ENCODE measurements at regions of chr2 and their contacts with region 1.

Region 1: DNA sequence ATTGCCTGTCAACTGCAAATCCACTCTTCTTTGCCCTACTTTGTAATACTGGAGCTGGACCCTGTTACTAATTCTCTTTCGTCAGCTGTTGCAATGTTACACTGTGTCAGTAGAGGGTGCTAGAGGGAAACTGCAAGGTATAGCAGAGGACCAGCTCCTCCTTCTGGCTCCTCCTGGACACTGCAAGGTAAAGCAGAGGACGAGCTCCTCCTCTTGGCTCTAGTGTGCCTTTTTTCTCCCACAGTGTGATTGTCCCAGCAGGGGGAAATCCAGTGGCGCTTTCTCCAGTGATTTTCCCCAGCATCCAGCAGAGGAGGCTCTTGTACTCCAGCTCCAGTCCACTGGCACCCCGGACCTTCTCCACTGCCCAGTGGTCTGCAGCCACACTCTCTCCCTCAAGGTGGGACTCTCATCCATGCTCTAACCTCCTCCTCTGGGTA is 95.6 kb downstream of the CAPN13 start:
- DNase-seq: peak; percentile 93
- H3K4me3 ChIP-seq: no peak overlapping the region
- H3K27ac ChIP-seq: no peak overlapping the region
- H3K4me1 ChIP-seq: peaks cover 4% of the 10 kb centered on the region
- CTCF ChIP-seq: peak; percentile 97

Region 2: GRCh38 chr2:30208452-30208851 is 503.2 kb before region 1 on chr2:
- CTCF ChIA-PET with region 1: interaction called, 8 read pairs
- POLR2A ChIA-PET with region 1: interaction called, 3 read pairs
- intact Hi-C with region 1: loop called (anchors 1 kb)
- DNase-seq: peak; percentile 62
- H3K4me3 ChIP-seq: no peak overlapping the region
- H3K27ac ChIP-seq: no peak overlapping the region
- H3K4me1 ChIP-seq: peaks cover 13% of the 10 kb centered on the region
- CTCF ChIP-seq: peak; percentile 95

Region 3: GRCh38 chr2:30691948-30692828 is 19.5 kb before region 1 on chr2:
- CTCF ChIA-PET with region 1: interaction called, 8 read pairs
- POLR2A ChIA-PET with region 1: no interaction called
- intact Hi-C with region 1: loop called (anchors 1 kb)
- DNase-seq: no peak
- H3K4me3 ChIP-seq: no peak overlapping the region
- H3K27ac ChIP-seq: no peak overlapping the region
- H3K4me1 ChIP-seq: no peaks in the 10 kb centered on the region
- CTCF ChIP-seq: no peak

Region 4: DNA sequence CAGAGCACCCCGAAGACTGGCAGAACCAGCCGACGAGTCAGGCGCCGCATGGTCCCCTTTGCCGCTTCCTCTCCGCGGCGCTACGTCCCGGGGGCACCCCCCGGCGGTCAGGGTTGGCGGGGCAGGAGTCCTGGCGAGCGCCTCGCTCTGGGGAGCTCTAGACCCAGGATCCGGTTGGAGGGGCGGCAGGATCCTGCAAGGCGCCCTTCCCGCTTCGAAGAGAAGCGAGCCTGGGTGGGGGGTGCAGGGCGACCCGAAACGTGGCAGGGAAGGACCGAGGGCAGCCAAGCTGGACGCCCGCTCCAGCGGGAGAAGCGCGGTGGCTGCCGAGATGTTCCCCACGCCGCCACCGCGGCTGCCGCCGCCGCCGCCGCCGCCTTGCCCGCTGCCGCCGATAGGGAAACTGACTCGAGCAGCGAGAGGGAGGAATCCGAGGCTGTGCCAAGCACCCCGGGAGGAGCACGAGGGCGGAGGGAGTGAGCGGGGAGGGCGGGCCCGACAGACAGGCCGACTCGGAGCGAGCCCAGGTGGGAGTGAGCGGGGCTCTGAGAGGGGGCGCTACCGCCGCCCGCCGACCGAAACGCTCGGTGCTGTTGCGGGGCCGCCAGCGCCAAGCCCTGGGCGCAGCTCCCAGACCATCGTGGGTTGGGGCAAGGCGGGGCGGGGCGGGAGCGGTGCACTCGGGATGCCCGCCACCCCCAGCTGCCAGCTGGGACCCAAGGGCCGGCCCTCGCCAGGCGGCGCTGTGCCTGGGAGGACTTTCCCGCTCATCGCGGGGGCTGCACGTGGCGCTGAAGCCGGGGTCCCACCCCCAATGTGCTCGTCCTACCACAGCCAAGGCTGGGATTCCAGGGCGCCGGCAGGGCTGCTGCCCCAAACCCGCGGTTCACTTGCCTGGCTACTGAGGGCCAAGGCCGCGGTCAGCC is 426.6 kb after region 1 on chr2 and contains the start of gene GALNT14:
- CTCF ChIA-PET with region 1: no interaction called
- POLR2A ChIA-PET with region 1: no interaction called
- intact Hi-C with region 1: loop called (anchors 2 kb)
- DNase-seq: peak; percentile 87
- H3K4me3 ChIP-seq: peak within 1 kb of the TSS; percentile 80
- H3K27ac ChIP-seq: peak within 1 kb of the TSS; percentile 30
- H3K4me1 ChIP-seq: peaks cover 30% of the 10 kb centered on the region
- CTCF ChIP-seq: peak; percentile 75
- total RNA-seq, gene GALNT14: 13.5 and 14.8 TPM in 2 replicates

Region 5: GRCh38 chr2:31333527-31334183 is 622.0 kb after region 1 on chr2:
- CTCF ChIA-PET with region 1: interaction called, 6 read pairs
- POLR2A ChIA-PET with region 1: no interaction called
- intact Hi-C with region 1: loop called (anchors 1 kb)
- DNase-seq: peak; percentile 85
- H3K4me3 ChIP-seq: no peak overlapping the region
- H3K27ac ChIP-seq: no peak overlapping the region
- H3K4me1 ChIP-seq: peaks cover 9% of the 10 kb centered on the region
- CTCF ChIP-seq: peak; percentile 100